IMR-90 (cell line): ENCODE measurements at regions of chr12 and their contacts with region 1.

Region 1: GRCh38 chr12:87848248-87848868 is 180.8 kb downstream of the C12orf50 start:
- DNase-seq: peak; percentile 82
- ATAC-seq: peak; percentile 72
- H3K4me3 ChIP-seq: no peak overlapping the region
- H3K27ac ChIP-seq: no peak overlapping the region
- H3K4me1 ChIP-seq: peaks cover 3% of the 10 kb centered on the region; the same call in 1 of the 2 replicates
- H3K27me3 ChIP-seq: no peaks in the 10 kb centered on the region
- CTCF ChIP-seq: peak; percentile 92
- POLR2A ChIP-seq: no peak
- RAD21 ChIP-seq: peak; percentile 96

Region 2: DNA sequence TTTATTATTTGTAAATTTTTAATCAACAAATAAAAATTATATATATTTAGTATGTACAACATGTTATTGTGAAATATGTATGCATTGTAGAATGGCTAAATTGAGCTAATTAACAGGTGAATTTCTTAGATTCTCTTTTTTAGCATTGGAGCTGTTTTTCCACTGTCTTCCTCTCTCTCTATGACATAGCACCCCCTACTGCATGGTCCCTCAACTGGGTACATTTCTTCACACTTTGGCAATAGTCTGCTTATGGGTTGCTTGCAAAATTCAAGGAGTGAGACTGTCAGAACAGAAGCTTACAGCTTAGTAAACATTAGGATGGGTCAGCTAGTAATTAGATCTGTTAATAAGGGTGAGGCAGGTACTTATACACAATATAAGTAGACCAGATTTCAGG is 933.6 kb before region 1 on chr12:
- CTCF ChIA-PET with region 1: no interaction called
- POLR2A ChIA-PET with region 1: no interaction called
- dilution Hi-C with region 1: no loop called
- in situ Hi-C with region 1: no loop called
- intact Hi-C with region 1: loop called (anchors 2 kb)
- DNase-seq: peak; percentile 58
- ATAC-seq: peak; percentile 88
- H3K4me3 ChIP-seq: no peak overlapping the region
- H3K27ac ChIP-seq: no peak overlapping the region
- H3K4me1 ChIP-seq: no peaks in the 10 kb centered on the region
- H3K27me3 ChIP-seq: no peaks in the 10 kb centered on the region
- CTCF ChIP-seq: peak; percentile 72
- POLR2A ChIP-seq: no peak
- RAD21 ChIP-seq: peak; percentile 85

Region 3: GRCh38 chr12:87274594-87275245 is 573.6 kb before region 1 on chr12:
- CTCF ChIA-PET with region 1: interaction called, 3 read pairs
- POLR2A ChIA-PET with region 1: no interaction called
- dilution Hi-C with region 1: no loop called
- in situ Hi-C with region 1: no loop called
- intact Hi-C with region 1: loop called (anchors 2 kb)
- DNase-seq: peak; percentile 38
- ATAC-seq: peak; percentile 55; the same call in 1 of the 2 replicates
- H3K4me3 ChIP-seq: no peak overlapping the region
- H3K27ac ChIP-seq: no peak overlapping the region
- H3K4me1 ChIP-seq: peaks cover 2% of the 10 kb centered on the region; the same call in 1 of the 2 replicates
- H3K27me3 ChIP-seq: no peaks in the 10 kb centered on the region
- CTCF ChIP-seq: peak; percentile 45
- POLR2A ChIP-seq: no peak
- RAD21 ChIP-seq: peak; percentile 44

Region 4: GRCh38 chr12:87509237-87509820 is 339.0 kb before region 1 on chr12:
- CTCF ChIA-PET with region 1: no interaction called
- POLR2A ChIA-PET with region 1: no interaction called
- dilution Hi-C with region 1: no loop called
- in situ Hi-C with region 1: no loop called
- intact Hi-C with region 1: loop called (anchors 10 kb)
- DNase-seq: peak; percentile 81
- ATAC-seq: peak; percentile 86
- H3K4me3 ChIP-seq: no peak overlapping the region
- H3K27ac ChIP-seq: no peak overlapping the region
- H3K4me1 ChIP-seq: peaks cover 2% of the 10 kb centered on the region; the same call in 1 of the 2 replicates
- H3K27me3 ChIP-seq: no peaks in the 10 kb centered on the region
- CTCF ChIP-seq: no peak
- POLR2A ChIP-seq: no peak
- RAD21 ChIP-seq: no peak

Region 5: DNA sequence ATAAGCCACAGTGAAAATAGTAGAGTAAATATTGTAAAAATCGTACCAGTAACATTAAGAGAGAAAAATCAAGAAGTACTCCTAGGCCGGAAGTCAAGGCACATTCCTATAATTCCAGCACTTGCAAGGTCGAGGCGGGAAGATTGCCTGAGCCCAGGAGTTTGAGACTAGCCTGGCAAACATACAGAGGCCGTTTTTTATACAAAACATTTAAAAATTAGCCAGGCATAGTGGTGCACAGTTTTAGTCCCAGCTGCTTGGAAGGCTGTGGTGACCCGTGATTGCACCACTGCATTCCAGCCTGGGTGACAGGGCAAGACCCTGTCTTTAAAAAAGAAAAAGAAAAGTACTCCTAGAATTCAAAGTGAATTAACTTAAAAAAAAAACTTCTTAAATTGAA is 161.0 kb before region 1 on chr12:
- CTCF ChIA-PET with region 1: no interaction called
- POLR2A ChIA-PET with region 1: no interaction called
- dilution Hi-C with region 1: no loop called
- in situ Hi-C with region 1: no loop called
- intact Hi-C with region 1: loop called (anchors 5 kb)
- DNase-seq: peak; percentile 60
- ATAC-seq: peak; percentile 77
- H3K4me3 ChIP-seq: no peak overlapping the region
- H3K27ac ChIP-seq: no peak overlapping the region
- H3K4me1 ChIP-seq: no peaks in the 10 kb centered on the region
- H3K27me3 ChIP-seq: no peaks in the 10 kb centered on the region
- CTCF ChIP-seq: no peak
- POLR2A ChIP-seq: no peak
- RAD21 ChIP-seq: no peak

Region 6: DNA sequence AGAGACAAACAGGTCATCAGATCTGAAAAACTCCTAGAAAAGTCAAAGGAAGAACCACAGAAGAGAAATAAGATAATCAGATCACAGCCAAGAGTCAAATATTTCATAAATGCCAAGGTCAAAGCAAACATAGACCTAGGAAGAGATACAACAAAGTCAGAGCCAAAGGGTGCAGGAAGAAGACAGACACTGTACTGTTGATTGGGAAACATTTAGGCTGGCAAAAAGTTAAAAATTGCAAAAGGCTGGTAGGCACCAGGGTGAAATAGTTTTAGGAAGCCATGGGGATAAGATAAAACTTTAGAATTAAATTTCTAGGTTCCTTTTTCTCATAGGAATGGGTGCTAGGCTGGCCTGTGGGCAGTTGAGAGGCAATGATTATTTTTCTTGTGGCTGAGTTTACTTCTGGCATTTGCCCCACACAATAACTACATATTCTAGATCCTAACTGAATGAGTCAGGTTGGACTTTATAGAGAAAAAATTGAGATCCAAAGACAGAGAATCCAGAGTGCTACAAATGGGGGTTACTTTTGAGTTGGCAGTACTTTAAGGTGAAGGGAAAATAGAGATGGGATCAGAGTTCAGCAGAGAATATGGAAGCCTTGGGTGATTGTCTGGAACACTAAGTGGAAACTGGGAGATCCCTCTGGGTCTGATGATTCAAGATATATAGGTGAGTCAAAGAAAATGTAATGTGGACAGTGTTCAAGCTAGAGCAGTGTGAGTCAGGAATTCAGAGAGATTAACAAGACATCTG is 34.7 kb before region 1 on chr12:
- CTCF ChIA-PET with region 1: no interaction called
- POLR2A ChIA-PET with region 1: no interaction called
- dilution Hi-C with region 1: no loop called
- in situ Hi-C with region 1: no loop called
- intact Hi-C with region 1: no loop called
- DNase-seq: peak; percentile 89
- ATAC-seq: peak; percentile 84
- H3K4me3 ChIP-seq: no peak overlapping the region
- H3K27ac ChIP-seq: peak overlapping the region; percentile 10; the same call in 1 of the 2 replicates
- H3K4me1 ChIP-seq: peaks cover 18% of the 10 kb centered on the region
- H3K27me3 ChIP-seq: no peaks in the 10 kb centered on the region
- CTCF ChIP-seq: no peak
- POLR2A ChIP-seq: no peak
- RAD21 ChIP-seq: no peak